CD8-positive, alpha-beta T cell (primary cell): ENCODE measurements at regions of chr18 and their contacts with region 1.

Region 1: GRCh38 chr18:9958861-9959399 is 45.1 kb downstream of the VAPA start:
- DNase-seq: no peak
- ATAC-seq: no peak
- H3K4me3 ChIP-seq: no peak overlapping the region
- H3K4me3 Mint-ChIP-seq: no peak overlapping the region
- H3K27ac ChIP-seq: no peak overlapping the region
- H3K27ac Mint-ChIP-seq: no peak overlapping the region
- H3K4me1 ChIP-seq: no peaks in the 10 kb centered on the region
- H3K4me1 Mint-ChIP-seq: peaks cover 20% of the 10 kb centered on the region
- H3K27me3 ChIP-seq: no peaks in the 10 kb centered on the region
- H3K27me3 Mint-ChIP-seq: no peaks in the 10 kb centered on the region
- CTCF ChIP-seq: no peak

Region 2: DNA sequence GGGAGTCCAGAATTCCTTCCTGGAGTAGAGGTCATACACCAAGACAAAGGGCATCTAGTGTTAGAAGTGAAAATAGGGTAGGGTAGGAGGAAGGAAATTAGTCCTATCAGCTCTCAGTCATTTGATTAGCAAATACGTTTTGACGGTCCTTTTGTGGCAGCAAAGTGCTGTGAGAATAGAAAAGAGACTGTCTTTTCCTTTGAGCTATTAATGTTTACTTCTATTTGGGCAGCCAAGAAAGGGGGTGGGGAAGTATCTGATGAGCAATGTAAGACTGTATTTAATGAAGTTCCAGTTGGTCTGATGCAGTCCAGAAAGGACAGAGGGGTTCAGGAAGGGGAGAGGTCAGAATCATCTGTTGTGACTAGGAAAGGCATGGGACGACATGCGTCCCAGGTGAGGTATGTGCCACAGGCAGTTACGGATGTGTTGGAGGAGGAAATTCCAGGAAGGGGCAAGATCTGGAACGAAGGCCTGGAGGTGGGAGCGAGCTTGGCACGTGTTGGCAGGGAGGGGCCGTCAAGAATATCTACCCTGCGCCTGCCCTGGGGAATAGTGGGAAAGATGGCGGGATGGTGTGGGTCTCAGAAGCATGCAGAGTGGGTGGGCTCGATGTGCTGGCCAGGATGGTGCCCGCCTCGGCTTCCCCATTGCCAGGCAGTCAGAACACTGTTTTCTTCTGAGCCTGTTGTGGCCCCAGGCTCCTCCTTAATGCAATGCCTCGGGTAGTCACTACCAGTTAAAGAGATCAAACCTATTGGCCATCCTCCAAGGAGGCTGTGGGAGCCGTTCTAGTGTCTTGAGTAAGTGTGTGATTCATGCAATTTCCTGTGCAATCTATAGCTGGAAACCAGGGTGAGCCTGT is 131.1 kb before region 1 on chr18:
- CTCF ChIA-PET with region 1: no interaction called
- POLR2A ChIA-PET with region 1: no interaction called
- intact Hi-C with region 1: no loop called
- DNase-seq: peak in 1 of 9 experiments; percentile 25
- ATAC-seq: no peak
- H3K4me3 ChIP-seq: no peak overlapping the region
- H3K4me3 Mint-ChIP-seq: no peak overlapping the region
- H3K27ac ChIP-seq: no peak overlapping the region
- H3K27ac Mint-ChIP-seq: no peak overlapping the region
- H3K4me1 ChIP-seq: no peaks in the 10 kb centered on the region
- H3K4me1 Mint-ChIP-seq: no peaks in the 10 kb centered on the region
- H3K27me3 ChIP-seq: peaks cover 0 to 4% of the 10 kb centered on the region in 2 experiments
- H3K27me3 Mint-ChIP-seq: peaks cover 7% of the 10 kb centered on the region
- CTCF ChIP-seq: no peak

Region 3: DNA sequence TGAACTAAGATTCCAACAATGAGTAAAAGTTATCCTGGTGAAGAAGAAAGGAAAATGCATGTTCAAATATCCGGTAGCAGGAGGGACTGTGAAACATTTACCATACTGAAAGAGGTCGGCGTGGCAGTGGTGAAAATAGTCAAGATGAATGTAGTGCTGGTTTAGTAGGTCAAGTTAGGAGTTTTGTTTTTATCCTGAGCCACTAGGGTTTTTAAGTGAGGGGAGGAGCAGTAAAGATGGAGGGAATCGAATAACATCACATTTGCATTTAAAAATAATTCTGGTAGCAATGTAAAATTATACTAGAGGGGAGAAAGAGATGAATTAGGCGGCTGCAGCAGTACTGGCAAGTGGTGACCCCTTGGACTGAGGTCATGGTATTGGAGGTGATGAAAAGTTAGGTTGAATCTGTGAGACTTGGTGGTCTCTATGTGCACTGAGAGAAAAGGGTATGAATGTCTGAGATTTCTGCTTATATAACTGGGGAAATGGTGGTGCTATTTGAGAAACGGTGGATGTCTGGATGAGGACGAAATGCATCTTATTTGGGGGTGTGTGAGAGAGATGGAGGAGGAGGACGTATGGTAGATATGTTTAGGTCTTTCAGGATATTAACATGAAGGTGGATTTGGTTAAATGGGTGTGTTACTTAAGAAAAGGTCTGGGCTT is 39.2 kb before region 1 on chr18:
- CTCF ChIA-PET with region 1: no interaction called
- POLR2A ChIA-PET with region 1: no interaction called
- intact Hi-C with region 1: loop called (anchors 5 kb)
- DNase-seq: no peak
- ATAC-seq: no peak
- H3K4me3 ChIP-seq: no peak overlapping the region
- H3K4me3 Mint-ChIP-seq: no peak overlapping the region
- H3K27ac ChIP-seq: no peak overlapping the region
- H3K27ac Mint-ChIP-seq: no peak overlapping the region
- H3K4me1 ChIP-seq: peaks cover 90% of the 10 kb centered on the region
- H3K4me1 Mint-ChIP-seq: peaks cover 44% of the 10 kb centered on the region
- H3K27me3 ChIP-seq: no peaks in the 10 kb centered on the region
- H3K27me3 Mint-ChIP-seq: no peaks in the 10 kb centered on the region
- CTCF ChIP-seq: no peak

Region 4: GRCh38 chr18:9943311-9943710 is 15.6 kb before region 1 on chr18:
- CTCF ChIA-PET with region 1: no interaction called
- POLR2A ChIA-PET with region 1: no interaction called
- intact Hi-C with region 1: no loop called
- DNase-seq: no peak
- ATAC-seq: no peak
- H3K4me3 ChIP-seq: no peak overlapping the region
- H3K4me3 Mint-ChIP-seq: no peak overlapping the region
- H3K27ac ChIP-seq: no peak overlapping the region
- H3K27ac Mint-ChIP-seq: no peak overlapping the region
- H3K4me1 ChIP-seq: no peaks in the 10 kb centered on the region
- H3K4me1 Mint-ChIP-seq: peaks cover 12% of the 10 kb centered on the region
- H3K27me3 ChIP-seq: no peaks in the 10 kb centered on the region
- H3K27me3 Mint-ChIP-seq: no peaks in the 10 kb centered on the region
- CTCF ChIP-seq: no peak